ENCODE measurements at regions of chr22 and their contacts with region 1.

Region 1: GRCh38 chr22:18152519-18152918 is 2.5 kb downstream of the USP18 start:
- DNase-seq: no peak
- H3K4me3 ChIP-seq: no peak overlapping the region
- H3K27ac ChIP-seq: no peak overlapping the region
- H3K27me3 ChIP-seq: no peaks in the 10 kb centered on the region
- CTCF ChIP-seq: no peak

Region 2: DNA sequence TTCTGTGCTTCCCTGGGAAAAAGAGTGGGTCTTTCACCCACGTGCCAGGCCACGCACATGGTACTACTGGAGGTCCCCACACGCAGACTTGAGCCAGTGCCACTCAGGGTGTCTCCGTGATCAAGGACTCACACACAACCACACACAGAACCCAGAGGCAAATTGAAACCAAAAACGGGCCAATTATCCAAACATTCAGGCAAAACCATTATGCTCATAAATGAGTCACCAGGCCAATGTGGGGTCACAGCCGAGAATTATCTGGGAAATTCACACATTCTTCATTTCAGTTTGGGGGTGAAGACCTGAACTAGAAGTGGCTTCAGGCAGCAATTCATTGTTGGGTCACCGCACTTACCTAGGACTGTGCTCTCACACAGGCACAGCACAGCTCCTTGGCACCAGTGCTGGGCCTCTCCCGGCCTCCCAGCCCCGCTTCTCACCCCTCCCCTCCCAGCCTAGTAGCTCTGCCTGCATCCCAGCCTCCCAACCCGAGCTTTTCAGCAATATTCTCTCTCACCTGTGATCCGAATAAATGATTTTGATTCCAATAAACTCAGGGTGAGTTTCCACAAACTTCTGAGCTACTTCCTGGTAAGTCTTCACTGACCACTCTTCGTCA is 961.2 kb before region 1 on chr22:
- CTCF ChIA-PET with region 1: no interaction called
- POLR2A ChIA-PET with region 1: interaction called, 11 read pairs
- DNase-seq: no peak
- H3K4me3 ChIP-seq: no peak overlapping the region
- H3K27ac ChIP-seq: no peak overlapping the region
- H3K27me3 ChIP-seq: no peaks in the 10 kb centered on the region
- CTCF ChIP-seq: no peak

Region 3: DNA sequence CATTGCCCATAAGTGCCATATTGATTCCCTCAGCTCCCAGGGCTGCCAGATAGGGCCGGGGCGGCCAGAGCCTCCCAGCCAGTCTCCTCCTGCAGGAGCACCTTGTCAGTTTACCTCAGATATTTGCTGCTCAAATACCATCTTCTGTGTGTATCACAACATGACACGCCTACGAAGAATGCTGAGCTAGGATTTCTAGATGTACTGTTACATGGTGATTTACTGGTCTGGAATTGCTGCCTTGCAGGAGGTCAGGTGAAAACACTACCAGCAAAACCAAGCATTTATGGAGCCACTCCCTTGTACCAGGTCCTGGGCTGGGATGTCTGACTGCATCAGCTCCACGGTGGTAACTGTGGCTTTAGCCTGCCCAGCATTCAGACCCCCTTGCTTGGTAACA is 140.0 kb before region 1 on chr22:
- CTCF ChIA-PET with region 1: no interaction called
- POLR2A ChIA-PET with region 1: no interaction called
- DNase-seq: no peak
- H3K4me3 ChIP-seq: no peak overlapping the region
- H3K27ac ChIP-seq: no peak overlapping the region
- H3K27me3 ChIP-seq: no peaks in the 10 kb centered on the region
- CTCF ChIP-seq: no peak